ENCODE measurements at regions of chrX and their contacts with region 1.

Region 1: GRCh38 chrX:41116948-41117347 is 31.7 kb downstream of the USP9X start:
- DNase-seq: no peak
- ATAC-seq: no peak
- H3K4me3 ChIP-seq: no peak overlapping the region
- H3K27ac ChIP-seq: no peak overlapping the region
- H3K4me1 ChIP-seq: no peaks in the 10 kb centered on the region
- H3K27me3 ChIP-seq: no peaks in the 10 kb centered on the region

Region 2: GRCh38 chrX:40792433-40792832 is 324.5 kb before region 1 on chrX:
- intact Hi-C with region 1: loop called in 1 of 2 experiments (anchors 10 kb)
- DNase-seq: no peak
- ATAC-seq: no peak
- H3K4me3 ChIP-seq: no peak overlapping the region
- H3K27ac ChIP-seq: no peak overlapping the region
- H3K4me1 ChIP-seq: no peaks in the 10 kb centered on the region
- H3K27me3 ChIP-seq: no peaks in the 10 kb centered on the region

Region 3: DNA sequence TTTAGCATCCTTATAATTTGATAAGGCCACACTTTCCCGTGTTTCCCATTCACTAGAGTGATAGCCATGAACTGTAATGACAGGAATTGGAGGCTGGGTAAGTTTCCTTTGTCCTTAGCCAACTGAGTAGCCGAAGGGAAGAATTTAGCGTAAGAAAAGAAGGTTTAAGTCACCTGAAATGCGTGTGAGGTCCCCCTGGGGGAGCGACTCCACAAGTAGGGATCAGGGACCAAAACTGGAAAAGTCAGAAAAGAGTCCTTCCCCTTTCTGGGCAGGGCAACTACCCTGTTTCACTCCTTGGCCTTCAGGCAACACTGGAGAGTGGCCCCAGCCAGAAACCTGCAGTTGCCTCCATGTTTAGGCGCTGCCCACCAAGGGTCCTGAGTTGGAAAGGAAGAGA is 300.0 kb before region 1 on chrX:
- intact Hi-C with region 1: no loop called
- DNase-seq: no peak
- ATAC-seq: no peak
- H3K4me3 ChIP-seq: no peak overlapping the region
- H3K27ac ChIP-seq: peak overlapping the region in 1 of 2 donors; percentile 6
- H3K4me1 ChIP-seq: no peaks in the 10 kb centered on the region
- H3K27me3 ChIP-seq: no peaks in the 10 kb centered on the region

Region 4: GRCh38 chrX:40877887-40878286 is 239.1 kb before region 1 on chrX:
- intact Hi-C with region 1: loop called (anchors 5 to 10 kb)
- DNase-seq: no peak
- ATAC-seq: no peak
- H3K4me3 ChIP-seq: no peak overlapping the region
- H3K27ac ChIP-seq: no peak overlapping the region
- H3K4me1 ChIP-seq: no peaks in the 10 kb centered on the region
- H3K27me3 ChIP-seq: no peaks in the 10 kb centered on the region

Region 5: DNA sequence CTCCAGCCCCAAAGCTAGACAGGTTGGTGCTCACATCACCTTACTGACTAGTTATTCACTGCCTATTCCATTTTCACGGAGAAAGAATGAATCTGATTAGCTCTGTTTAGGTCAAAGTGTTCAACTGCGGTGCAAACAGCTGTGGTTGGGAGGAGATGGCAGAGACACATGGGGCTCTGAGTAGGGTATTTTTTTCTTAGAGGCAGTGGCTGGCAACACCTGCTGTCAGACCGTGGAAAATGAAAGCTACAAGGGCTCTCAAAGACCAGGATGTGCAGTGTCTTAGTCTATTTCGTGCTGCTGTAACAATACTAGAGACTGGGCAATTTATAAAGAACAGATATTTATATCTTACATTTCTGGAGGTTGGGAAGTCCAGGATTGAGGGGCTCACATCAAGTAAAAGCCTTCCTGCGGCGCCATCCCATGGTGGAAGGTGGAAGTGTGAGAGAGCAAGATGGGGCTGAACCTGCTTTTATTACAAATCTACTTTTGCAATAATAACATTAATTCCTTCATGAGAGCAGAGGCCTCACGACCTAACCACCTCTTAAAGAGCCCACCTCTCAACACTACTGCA is 340.8 kb after region 1 on chrX:
- intact Hi-C with region 1: no loop called
- DNase-seq: no peak
- ATAC-seq: no peak
- H3K4me3 ChIP-seq: no peak overlapping the region
- H3K27ac ChIP-seq: no peak overlapping the region
- H3K4me1 ChIP-seq: no peaks in the 10 kb centered on the region
- H3K27me3 ChIP-seq: no peaks in the 10 kb centered on the region